CD4-positive, alpha-beta memory T cell (primary cell): ENCODE measurements at regions of chr1 and their contacts with region 1.

Region 1: DNA sequence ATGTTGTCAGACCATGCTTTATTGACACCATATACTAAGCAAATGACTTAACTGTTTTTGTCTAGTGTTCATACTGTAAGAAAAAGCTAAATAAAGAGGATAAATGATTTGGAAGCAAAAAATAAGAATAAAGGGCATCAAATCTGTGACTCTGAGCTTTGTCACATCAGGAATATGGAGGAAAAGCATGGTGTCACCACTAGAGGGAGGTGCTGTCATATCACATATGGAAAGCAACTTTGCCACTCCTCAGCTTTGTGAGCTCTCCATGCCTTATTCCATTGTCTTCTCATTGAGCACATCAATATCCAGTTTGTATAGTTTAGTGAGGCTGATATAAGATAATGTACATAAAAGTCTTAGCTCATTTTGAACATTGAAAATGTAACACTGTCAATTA is 20.8 kb upstream of the GBP1 start:
- DNase-seq: peak in 4 of 5 donors; percentile 45 to 66 (median 48)
- H3K4me3 ChIP-seq: no peak overlapping the region
- H3K4me3 Mint-ChIP-seq: no peak overlapping the region
- H3K27ac ChIP-seq: no peak overlapping the region
- H3K27ac Mint-ChIP-seq: no peak overlapping the region
- H3K4me1 ChIP-seq: no peaks in the 10 kb centered on the region
- H3K4me1 Mint-ChIP-seq: peaks cover 0 to 4% (median 2%) of the 10 kb centered on the region in 4 donors
- H3K27me3 ChIP-seq: no peaks in the 10 kb centered on the region
- H3K27me3 Mint-ChIP-seq: no peaks in the 10 kb centered on the region

Region 2: GRCh38 chr1:88998716-88999115 is 87.1 kb before region 1 on chr1:
- CTCF ChIA-PET with region 1: interaction called, 17 read pairs
- POLR2A ChIA-PET with region 1: no interaction called
- intact Hi-C with region 1: loop called (anchors 1 kb)
- DNase-seq: peak; percentile 51 to 74 (median 71)
- H3K4me3 ChIP-seq: no peak overlapping the region
- H3K4me3 Mint-ChIP-seq: no peak overlapping the region
- H3K27ac ChIP-seq: no peak overlapping the region
- H3K27ac Mint-ChIP-seq: no peak overlapping the region
- H3K4me1 ChIP-seq: peaks cover 25% of the 10 kb centered on the region
- H3K4me1 Mint-ChIP-seq: peaks cover 20 to 40% (median 30%) of the 10 kb centered on the region in 4 donors
- H3K27me3 ChIP-seq: no peaks in the 10 kb centered on the region
- H3K27me3 Mint-ChIP-seq: no peaks in the 10 kb centered on the region